Heart right ventricle (tissue), 16 donors: ENCODE measurements at regions of chr13 and their contacts with region 1.

Region 1: GRCh38 chr13:104553186-104553585 is 1487.0 kb upstream of the SLC10A2 start:
- DNase-seq: no peak
- ATAC-seq: no peak
- H3K4me3 ChIP-seq: no peak overlapping the region
- H3K27ac ChIP-seq: no peak overlapping the region
- H3K4me1 ChIP-seq: no peaks in the 10 kb centered on the region
- H3K27me3 ChIP-seq: no peaks in the 10 kb centered on the region
- CTCF ChIP-seq: no peak

Region 2: DNA sequence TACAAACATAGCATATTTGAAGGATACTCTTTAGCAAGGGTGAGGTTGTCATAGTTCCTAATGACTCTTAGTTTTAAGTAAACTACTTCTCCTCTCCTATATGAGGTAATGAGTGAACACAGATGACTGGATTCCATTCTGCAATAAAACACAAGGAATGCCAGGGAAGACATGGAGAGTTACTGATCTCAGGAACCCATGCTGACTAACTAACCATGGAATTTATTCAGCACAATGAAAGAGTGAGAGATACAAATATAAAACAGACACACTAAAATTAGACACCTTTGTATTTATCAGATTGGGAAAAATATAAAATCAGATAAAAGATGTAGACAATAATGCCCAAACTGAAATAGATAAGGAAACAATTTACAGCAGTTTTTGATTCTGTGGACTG is 38.9 kb after region 1 on chr13:
- intact Hi-C with region 1: loop called in 1 of 10 experiments (anchors 1 kb)
- DNase-seq: no peak
- ATAC-seq: no peak
- H3K4me3 ChIP-seq: no peak overlapping the region
- H3K27ac ChIP-seq: no peak overlapping the region
- H3K4me1 ChIP-seq: no peaks in the 10 kb centered on the region
- H3K27me3 ChIP-seq: peaks cover 0 to 3% (median 0%) of the 10 kb centered on the region in 7 donors
- CTCF ChIP-seq: no peak

Region 3: GRCh38 chr13:104608331-104608730 is 55.1 kb after region 1 on chr13:
- intact Hi-C with region 1: no loop called
- DNase-seq: no peak
- ATAC-seq: no peak
- H3K4me3 ChIP-seq: no peak overlapping the region
- H3K27ac ChIP-seq: no peak overlapping the region
- H3K4me1 ChIP-seq: no peaks in the 10 kb centered on the region
- H3K27me3 ChIP-seq: no peaks in the 10 kb centered on the region
- CTCF ChIP-seq: no peak

Region 4: DNA sequence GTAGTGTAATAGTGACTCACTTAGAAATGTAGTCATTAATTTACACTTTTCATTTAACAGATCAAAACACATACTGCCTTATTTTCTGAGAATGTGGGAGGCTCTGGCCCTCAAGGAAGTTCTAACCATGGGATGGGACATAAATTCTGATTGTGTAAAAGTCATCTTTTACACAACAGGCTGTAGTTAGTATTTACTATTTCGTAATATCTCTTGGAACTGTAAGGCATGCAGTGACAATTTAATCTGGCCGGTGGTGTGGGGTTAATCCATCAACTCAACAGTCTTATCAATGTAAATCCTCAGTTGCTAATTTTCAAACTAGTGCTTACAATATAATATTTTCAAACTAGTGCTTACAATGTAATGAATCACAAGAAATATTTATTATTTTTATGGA is 383.1 kb after region 1 on chr13:
- intact Hi-C with region 1: no loop called
- DNase-seq: no peak
- ATAC-seq: no peak
- H3K4me3 ChIP-seq: no peak overlapping the region
- H3K27ac ChIP-seq: no peak overlapping the region
- H3K4me1 ChIP-seq: no peaks in the 10 kb centered on the region
- H3K27me3 ChIP-seq: no peaks in the 10 kb centered on the region
- CTCF ChIP-seq: no peak